Breast epithelium (tissue), 4 donors: ENCODE measurements at regions of chr2 and their contacts with region 1.

Region 1: GRCh38 chr2:121220995-121221394 is 64.0 kb downstream of the TFCP2L1 start:
- DNase-seq: no peak
- H3K4me3 ChIP-seq: no peak overlapping the region
- H3K27ac ChIP-seq: no peak overlapping the region
- H3K4me1 ChIP-seq: no peaks in the 10 kb centered on the region
- H3K27me3 ChIP-seq: no peaks in the 10 kb centered on the region
- CTCF ChIP-seq: no peak
- POLR2A ChIP-seq: no peak

Region 2: DNA sequence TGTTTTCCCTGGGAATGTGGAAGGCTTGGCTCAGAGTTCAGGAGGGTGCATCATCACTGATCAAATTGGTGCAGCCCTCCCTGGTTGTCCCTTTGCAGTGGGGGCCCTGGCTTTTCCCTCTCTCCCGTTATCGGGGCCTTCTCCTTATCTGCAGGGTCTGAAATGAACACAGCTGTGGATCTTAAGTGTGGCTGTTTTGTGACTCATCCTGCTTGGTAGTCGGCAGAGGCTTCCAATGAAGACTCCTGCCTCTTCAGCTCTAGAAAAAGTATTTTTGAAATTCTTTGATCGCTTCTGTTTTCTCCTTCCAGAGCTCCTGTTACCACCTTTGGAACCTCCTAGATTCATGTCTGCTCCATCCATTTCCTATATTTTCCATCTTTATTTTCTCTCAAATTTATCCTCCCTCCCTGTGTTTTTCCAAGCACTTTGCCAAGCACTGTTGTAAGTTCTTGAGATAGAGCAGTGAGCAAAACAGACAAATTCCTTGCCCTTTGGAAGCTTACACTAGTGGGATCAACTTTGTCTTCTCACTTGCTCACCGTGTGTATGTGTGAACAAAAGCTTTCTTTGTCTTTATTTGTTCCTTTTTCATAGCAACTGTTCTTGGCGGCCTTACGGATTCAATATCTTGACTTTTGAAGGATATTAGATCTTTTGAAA is 922.7 kb before region 1 on chr2:
- intact Hi-C with region 1: loop called (anchors 5 kb)
- DNase-seq: no peak
- H3K4me3 ChIP-seq: no peak overlapping the region
- H3K27ac ChIP-seq: no peak overlapping the region
- H3K4me1 ChIP-seq: no peaks in the 10 kb centered on the region
- H3K27me3 ChIP-seq: no peaks in the 10 kb centered on the region
- CTCF ChIP-seq: no peak
- POLR2A ChIP-seq: no peak

Region 3: GRCh38 chr2:121235542-121235941 is 14.5 kb after region 1 on chr2:
- intact Hi-C with region 1: no loop called
- DNase-seq: no peak
- H3K4me3 ChIP-seq: no peak overlapping the region
- H3K27ac ChIP-seq: no peak overlapping the region
- H3K4me1 ChIP-seq: no peaks in the 10 kb centered on the region
- H3K27me3 ChIP-seq: no peaks in the 10 kb centered on the region
- CTCF ChIP-seq: no peak
- POLR2A ChIP-seq: no peak